ENCODE measurements at regions of chr3 and their contacts with region 1.

Region 1: GRCh38 chr3:157130467-157131251 is 29.3 kb downstream of the CCNL1 start:
- DNase-seq: peak; percentile 89 to 94
- H3K4me3 ChIP-seq: peak overlapping the region; percentile 13
- H3K4me3 Mint-ChIP-seq: peak overlapping the region; percentile 64
- H3K27ac Mint-ChIP-seq: peak overlapping the region; percentile 95
- H3K4me1 ChIP-seq: peaks cover 64% of the 10 kb centered on the region
- H3K4me1 Mint-ChIP-seq: peaks cover 33% of the 10 kb centered on the region
- H3K27me3 ChIP-seq: no peaks in the 10 kb centered on the region
- H3K27me3 Mint-ChIP-seq: no peaks in the 10 kb centered on the region
- CTCF ChIP-seq: peak; percentile 55 to 76

Region 2: DNA sequence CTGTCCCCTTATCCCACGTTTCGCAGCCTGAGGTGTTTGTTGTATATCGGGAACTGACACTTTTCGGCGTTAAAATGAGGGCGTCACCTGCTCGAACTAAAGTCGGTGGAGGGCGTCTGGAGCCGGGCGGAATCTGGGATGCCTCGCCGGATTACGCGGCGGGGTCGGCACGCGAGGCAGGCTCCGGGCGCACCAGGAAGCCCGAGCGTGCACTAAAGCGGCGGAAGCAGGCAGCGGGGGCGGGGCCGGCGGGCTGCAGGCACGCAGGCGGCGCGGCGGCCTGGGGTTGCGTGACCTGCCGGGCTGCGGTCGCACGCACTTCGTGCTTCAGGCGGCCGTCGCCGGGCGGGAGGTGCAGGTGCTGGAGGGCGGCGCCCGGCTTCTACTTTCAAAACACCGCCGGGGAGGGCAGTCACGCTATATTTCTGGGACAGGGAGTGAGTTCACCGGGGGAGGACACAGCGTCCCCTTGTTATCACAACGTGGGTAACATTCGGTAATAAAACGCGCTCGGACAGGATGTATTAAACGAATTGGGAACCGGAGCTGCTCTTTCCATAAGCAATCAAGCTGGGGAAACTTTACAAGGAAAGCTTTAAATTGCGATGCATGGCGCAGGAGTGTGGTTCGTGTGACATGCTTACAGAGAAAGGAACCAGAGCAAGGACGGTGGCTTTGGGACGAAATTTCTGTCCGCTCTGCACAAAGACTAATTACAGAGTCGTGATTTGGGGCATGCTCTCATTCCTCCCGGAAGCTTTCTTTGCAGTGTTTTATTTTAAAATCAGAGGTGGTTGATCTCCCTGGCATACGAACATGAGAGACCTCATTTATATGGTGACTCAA is 313.6 kb before region 1 on chr3:
- CTCF ChIA-PET with region 1: no interaction called
- POLR2A ChIA-PET with region 1: no interaction called
- intact Hi-C with region 1: loop called (anchors 1 kb)
- DNase-seq: peak; percentile 94 to 96
- H3K4me3 ChIP-seq: peak overlapping the region; percentile 84
- H3K4me3 Mint-ChIP-seq: peak overlapping the region; percentile 90
- H3K27ac Mint-ChIP-seq: peak overlapping the region; percentile 91
- H3K4me1 ChIP-seq: peaks cover 43% of the 10 kb centered on the region
- H3K4me1 Mint-ChIP-seq: peaks cover 14% of the 10 kb centered on the region
- H3K27me3 ChIP-seq: no peaks in the 10 kb centered on the region
- H3K27me3 Mint-ChIP-seq: no peaks in the 10 kb centered on the region
- CTCF ChIP-seq: no peak

Region 3: GRCh38 chr3:156891665-156892064 is 239.0 kb before region 1 on chr3:
- CTCF ChIA-PET with region 1: no interaction called
- POLR2A ChIA-PET with region 1: no interaction called
- intact Hi-C with region 1: loop called (anchors 2 kb)
- DNase-seq: no peak
- H3K4me3 ChIP-seq: no peak overlapping the region
- H3K4me3 Mint-ChIP-seq: no peak overlapping the region
- H3K27ac Mint-ChIP-seq: no peak overlapping the region
- H3K4me1 ChIP-seq: no peaks in the 10 kb centered on the region
- H3K4me1 Mint-ChIP-seq: no peaks in the 10 kb centered on the region
- H3K27me3 ChIP-seq: no peaks in the 10 kb centered on the region
- H3K27me3 Mint-ChIP-seq: no peaks in the 10 kb centered on the region
- CTCF ChIP-seq: peak in 1 of 2 experiments; percentile 23

Region 4: GRCh38 chr3:156983559-156983958 is 147.1 kb before region 1 on chr3:
- CTCF ChIA-PET with region 1: no interaction called
- POLR2A ChIA-PET with region 1: no interaction called
- intact Hi-C with region 1: loop called (anchors 10 kb)
- DNase-seq: no peak
- H3K4me3 ChIP-seq: no peak overlapping the region
- H3K4me3 Mint-ChIP-seq: no peak overlapping the region
- H3K27ac Mint-ChIP-seq: no peak overlapping the region
- H3K4me1 ChIP-seq: peaks cover 5% of the 10 kb centered on the region; the same call in 1 of the 2 replicates
- H3K4me1 Mint-ChIP-seq: peaks cover 22% of the 10 kb centered on the region
- H3K27me3 ChIP-seq: no peaks in the 10 kb centered on the region
- H3K27me3 Mint-ChIP-seq: no peaks in the 10 kb centered on the region
- CTCF ChIP-seq: no peak

Region 5: GRCh38 chr3:157081681-157082210 is 48.9 kb before region 1 on chr3:
- CTCF ChIA-PET with region 1: interaction called, 4 read pairs
- POLR2A ChIA-PET with region 1: no interaction called
- intact Hi-C with region 1: loop called (anchors 1 kb)
- DNase-seq: peak; percentile 85 to 91
- H3K4me3 ChIP-seq: no peak overlapping the region
- H3K4me3 Mint-ChIP-seq: no peak overlapping the region
- H3K27ac Mint-ChIP-seq: peak overlapping the region; percentile 66
- H3K4me1 ChIP-seq: peaks cover 6% of the 10 kb centered on the region
- H3K4me1 Mint-ChIP-seq: peaks cover 11% of the 10 kb centered on the region
- H3K27me3 ChIP-seq: no peaks in the 10 kb centered on the region
- H3K27me3 Mint-ChIP-seq: no peaks in the 10 kb centered on the region
- CTCF ChIP-seq: peak; percentile 94

Region 6: DNA sequence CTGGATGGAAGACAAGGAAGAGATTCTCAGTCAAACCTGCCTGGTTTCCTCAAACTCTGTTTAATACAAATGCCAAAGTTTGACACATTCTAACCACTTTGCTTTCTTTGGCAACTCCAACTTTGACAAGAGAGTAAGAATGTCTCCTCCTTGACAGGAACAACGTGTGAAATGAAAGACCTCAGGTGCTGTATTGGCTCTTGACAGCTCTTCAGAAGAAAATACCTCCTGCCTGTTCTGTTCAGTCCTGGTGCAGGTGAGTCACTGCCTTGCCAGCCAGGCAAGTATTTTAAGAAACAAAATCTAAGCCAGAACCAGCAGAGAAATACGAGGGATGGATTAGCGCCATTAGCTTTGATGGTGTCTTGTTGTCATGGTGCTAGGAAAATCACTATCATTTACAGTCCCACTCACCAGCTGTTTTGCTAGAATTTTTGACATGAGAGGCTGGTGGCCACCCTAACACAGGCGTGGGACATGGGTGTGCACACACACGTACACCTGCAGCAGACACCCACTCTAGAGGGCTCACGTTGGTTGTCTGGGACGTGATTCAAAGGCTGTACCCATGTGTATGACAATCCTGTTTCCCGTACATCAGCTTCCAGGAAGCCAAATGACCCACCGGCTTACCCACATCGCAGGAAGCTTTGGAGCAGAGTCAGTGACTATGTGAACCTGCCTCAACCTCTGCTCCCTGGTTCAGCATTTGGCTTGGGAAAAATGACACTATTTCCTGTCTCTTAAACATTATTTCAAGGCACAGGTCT is 31.1 kb before region 1 on chr3:
- CTCF ChIA-PET with region 1: no interaction called
- POLR2A ChIA-PET with region 1: no interaction called
- intact Hi-C with region 1: no loop called
- DNase-seq: no peak
- H3K4me3 ChIP-seq: no peak overlapping the region
- H3K4me3 Mint-ChIP-seq: no peak overlapping the region
- H3K27ac Mint-ChIP-seq: no peak overlapping the region
- H3K4me1 ChIP-seq: no peaks in the 10 kb centered on the region
- H3K4me1 Mint-ChIP-seq: peaks cover 6% of the 10 kb centered on the region
- H3K27me3 ChIP-seq: no peaks in the 10 kb centered on the region
- H3K27me3 Mint-ChIP-seq: no peaks in the 10 kb centered on the region
- CTCF ChIP-seq: no peak